Left lung (tissue), 14 donors: ENCODE measurements at regions of chr15 and their contacts with region 1.

Region 1: DNA sequence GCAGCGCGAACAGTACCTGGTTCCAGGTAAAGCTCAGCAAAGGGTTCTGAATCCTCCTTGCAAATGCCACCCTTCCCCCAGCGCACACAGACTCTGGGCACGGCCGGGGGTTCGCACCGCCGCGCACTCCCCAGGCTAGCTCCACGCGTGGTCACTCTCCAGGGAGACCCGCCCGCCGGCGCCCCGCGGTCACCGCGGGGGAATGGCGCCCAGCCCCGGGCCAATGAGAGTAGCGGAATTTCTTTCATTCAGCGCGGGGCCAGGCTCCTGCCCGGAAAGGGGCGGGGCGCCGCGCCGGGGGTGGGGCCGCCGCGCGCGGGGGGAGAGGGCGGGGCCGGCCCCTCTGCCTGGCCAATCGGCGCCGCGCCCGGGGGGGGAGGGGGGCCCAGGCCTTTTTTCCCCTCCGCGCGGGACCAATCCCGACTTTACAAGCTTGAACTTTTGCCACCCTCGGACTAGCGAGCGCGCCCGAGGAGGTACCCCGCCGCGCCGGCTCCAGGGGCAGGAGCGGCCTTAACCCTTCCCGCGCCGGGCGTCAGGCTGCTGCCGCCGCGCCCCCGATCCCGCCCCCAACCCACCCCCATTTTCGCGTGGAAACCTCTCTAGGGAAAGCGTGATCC is 1.1 kb upstream of the SMAD6 start:
- DNase-seq: peak; percentile 94 to 97 (median 95)
- ATAC-seq: peak; percentile 79
- H3K4me3 ChIP-seq: peak overlapping the region; percentile 76 to 82
- H3K27ac ChIP-seq: peak overlapping the region; percentile 87 to 90
- H3K4me1 ChIP-seq: peaks cover 2 to 47% of the 10 kb centered on the region in 2 donors
- H3K27me3 ChIP-seq: peaks cover 0 to 32% of the 10 kb centered on the region in 2 donors
- CTCF ChIP-seq: no peak

Region 2: GRCh38 chr15:66619151-66619903 is 81.6 kb before region 1 on chr15:
- intact Hi-C with region 1: loop called in 1 of 2 experiments (anchors 10 kb)
- DNase-seq: peak; percentile 62 to 93 (median 70)
- ATAC-seq: peak; percentile 85
- H3K4me3 ChIP-seq: no peak overlapping the region
- H3K27ac ChIP-seq: peak overlapping the region; percentile 82 to 91
- H3K4me1 ChIP-seq: peaks cover 20 to 75% of the 10 kb centered on the region in 2 donors
- H3K27me3 ChIP-seq: peaks cover 0 to 15% of the 10 kb centered on the region in 2 donors
- CTCF ChIP-seq: peak; percentile 78 to 91

Region 3: GRCh38 chr15:66765478-66766281 is 64.8 kb after region 1 on chr15:
- intact Hi-C with region 1: loop called in 1 of 2 experiments (anchors 10 kb)
- DNase-seq: peak in 3 of 4 donors; percentile 63 to 86 (median 83)
- ATAC-seq: peak; percentile 62
- H3K4me3 ChIP-seq: no peak overlapping the region
- H3K27ac ChIP-seq: peak overlapping the region; percentile 34 to 37
- H3K4me1 ChIP-seq: peaks cover 56 to 90% of the 10 kb centered on the region in 2 donors
- H3K27me3 ChIP-seq: peaks cover 0 to 15% of the 10 kb centered on the region in 2 donors
- CTCF ChIP-seq: no peak

Region 4: DNA sequence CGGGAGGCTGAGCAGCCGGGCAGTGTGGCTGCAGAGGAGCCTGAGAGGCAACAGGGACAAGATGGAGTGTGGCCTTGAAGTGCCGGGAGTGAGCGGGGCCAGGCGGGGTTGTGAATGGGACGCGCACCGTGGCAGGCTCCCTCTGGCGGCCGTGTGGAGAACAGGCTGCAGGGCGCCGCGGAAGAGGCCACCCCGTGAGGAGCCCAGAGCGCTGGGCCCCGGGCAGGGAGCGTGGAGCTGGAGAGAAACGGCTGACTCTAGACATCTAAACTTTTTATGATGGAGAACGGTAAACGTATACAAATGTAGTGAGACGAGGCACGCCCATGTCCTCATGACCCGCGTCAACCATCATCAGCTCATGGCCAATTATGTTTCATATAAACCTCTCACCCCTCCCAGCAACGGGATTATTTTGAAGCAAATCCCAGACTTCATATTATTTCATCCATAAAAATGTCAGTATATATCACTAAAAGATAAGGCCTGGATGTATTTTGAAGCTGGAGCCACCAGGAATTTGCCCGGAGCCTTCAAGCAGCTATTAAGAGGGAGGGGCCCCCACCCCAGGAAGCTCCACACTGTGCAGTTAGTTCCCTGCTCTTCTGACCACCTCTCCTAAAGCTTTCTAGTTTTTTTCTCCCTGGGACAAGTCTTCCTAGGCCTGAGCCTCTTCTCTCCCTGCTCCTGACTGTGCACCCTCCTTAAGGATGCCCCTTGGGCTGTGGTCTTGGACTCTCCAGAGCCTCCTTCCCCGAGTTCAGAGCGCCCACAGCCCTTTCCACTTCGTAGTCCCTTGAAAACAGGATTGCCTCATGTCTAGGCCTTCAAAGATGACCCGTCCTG is 150.5 kb after region 1 on chr15:
- intact Hi-C with region 1: loop called in 1 of 2 experiments (anchors 10 kb)
- DNase-seq: peak; percentile 81 to 97 (median 88)
- ATAC-seq: peak; percentile 98
- H3K4me3 ChIP-seq: no peak overlapping the region
- H3K27ac ChIP-seq: no peak overlapping the region
- H3K4me1 ChIP-seq: peaks cover 5 to 18% of the 10 kb centered on the region in 2 donors
- H3K27me3 ChIP-seq: no peaks in the 10 kb centered on the region
- CTCF ChIP-seq: peak; percentile 98